A673 (cell line): ENCODE measurements at regions of chr7 and their contacts with region 1.

Region 1: GRCh38 chr7:65216459-65216858 is 157.2 kb upstream of the ZNF92 start:
- DNase-seq: peak; percentile 40
- H3K4me3 ChIP-seq: no peak overlapping the region
- H3K27ac ChIP-seq: no peak overlapping the region
- H3K4me1 ChIP-seq: no peaks in the 10 kb centered on the region
- H3K27me3 ChIP-seq: no peaks in the 10 kb centered on the region
- CTCF ChIP-seq: peak; percentile 75

Region 2: GRCh38 chr7:64313740-64314491 is 902.5 kb before region 1 on chr7 and contains the start of gene ZNF736:
- CTCF ChIA-PET with region 1: no interaction called
- POLR2A ChIA-PET with region 1: no interaction called
- intact Hi-C with region 1: no loop called
- DNase-seq: peak; percentile 39
- H3K4me3 ChIP-seq: peak within 1 kb of the TSS; percentile 36
- H3K27ac ChIP-seq: peak within 1 kb of the TSS; percentile 23
- H3K4me1 ChIP-seq: no peaks in the 10 kb centered on the region
- H3K27me3 ChIP-seq: no peaks in the 10 kb centered on the region
- CTCF ChIP-seq: no peak
- total RNA-seq, gene ZNF736: 1.8 and 3.2 TPM in 2 replicates

Region 3: DNA sequence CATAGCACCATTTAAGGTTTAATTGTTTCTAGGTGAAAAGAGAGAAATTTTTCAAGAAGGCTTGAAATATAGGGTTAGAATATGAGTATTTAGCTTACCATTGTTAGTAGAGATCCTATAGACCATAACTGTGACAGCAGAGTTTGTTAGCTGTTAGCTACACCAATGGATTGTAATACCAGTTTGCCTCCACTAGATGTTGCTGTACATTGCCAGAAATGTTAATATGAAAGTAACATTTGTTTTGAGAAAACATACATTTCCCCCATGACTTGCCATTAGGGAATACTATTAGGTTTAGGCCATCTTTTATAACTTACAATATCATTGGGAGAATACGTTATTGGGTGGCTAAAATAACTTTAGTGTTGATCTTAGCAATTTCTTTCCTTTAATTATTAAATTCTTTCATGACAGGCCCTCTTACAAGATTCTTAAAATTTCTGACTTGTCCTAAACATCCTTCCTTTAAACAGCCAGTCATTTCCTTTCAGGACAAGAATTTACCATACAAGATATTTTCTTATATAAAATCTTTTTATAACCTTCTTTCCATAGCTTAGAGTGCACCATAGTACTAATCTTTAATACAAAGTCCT is 265.1 kb before region 1 on chr7:
- CTCF ChIA-PET with region 1: no interaction called
- POLR2A ChIA-PET with region 1: no interaction called
- intact Hi-C with region 1: loop called (anchors 5 kb)
- DNase-seq: peak; percentile 65
- H3K4me3 ChIP-seq: no peak overlapping the region
- H3K27ac ChIP-seq: no peak overlapping the region
- H3K4me1 ChIP-seq: no peaks in the 10 kb centered on the region
- H3K27me3 ChIP-seq: peaks cover 7% of the 10 kb centered on the region
- CTCF ChIP-seq: peak; percentile 75

Region 4: DNA sequence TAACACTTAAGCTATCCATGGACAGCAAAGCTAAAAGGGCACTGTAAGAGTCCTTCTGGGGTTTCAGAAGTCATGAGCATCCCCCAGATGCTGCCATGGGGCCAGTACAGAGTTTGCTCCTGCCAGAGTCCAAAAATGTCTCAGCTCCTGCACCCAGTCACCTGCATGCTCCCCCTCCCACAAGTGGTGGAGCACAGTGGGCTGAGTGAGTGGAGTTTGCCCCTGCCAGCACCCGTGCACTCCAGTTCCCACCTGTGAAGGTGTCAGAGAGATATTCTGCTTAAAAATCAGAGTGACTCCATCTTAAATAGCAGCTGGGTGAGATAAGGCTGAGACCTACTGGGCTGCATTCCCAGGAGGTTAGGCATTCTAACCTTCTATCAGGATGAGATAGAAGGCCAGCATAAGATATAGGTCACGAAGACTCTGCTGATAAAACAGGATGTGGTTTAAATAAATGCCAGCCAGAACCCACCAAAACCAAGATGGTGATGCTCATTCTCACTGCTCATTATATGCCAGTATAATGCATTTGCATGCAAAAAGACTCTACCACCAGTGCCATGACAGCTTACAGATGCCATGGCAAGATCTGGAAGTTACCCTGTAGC is 17.1 kb after region 1 on chr7:
- CTCF ChIA-PET with region 1: no interaction called
- POLR2A ChIA-PET with region 1: no interaction called
- intact Hi-C with region 1: no loop called
- DNase-seq: no peak
- H3K4me3 ChIP-seq: no peak overlapping the region
- H3K27ac ChIP-seq: no peak overlapping the region
- H3K4me1 ChIP-seq: peaks cover 6% of the 10 kb centered on the region
- H3K27me3 ChIP-seq: no peaks in the 10 kb centered on the region
- CTCF ChIP-seq: no peak

Region 5: DNA sequence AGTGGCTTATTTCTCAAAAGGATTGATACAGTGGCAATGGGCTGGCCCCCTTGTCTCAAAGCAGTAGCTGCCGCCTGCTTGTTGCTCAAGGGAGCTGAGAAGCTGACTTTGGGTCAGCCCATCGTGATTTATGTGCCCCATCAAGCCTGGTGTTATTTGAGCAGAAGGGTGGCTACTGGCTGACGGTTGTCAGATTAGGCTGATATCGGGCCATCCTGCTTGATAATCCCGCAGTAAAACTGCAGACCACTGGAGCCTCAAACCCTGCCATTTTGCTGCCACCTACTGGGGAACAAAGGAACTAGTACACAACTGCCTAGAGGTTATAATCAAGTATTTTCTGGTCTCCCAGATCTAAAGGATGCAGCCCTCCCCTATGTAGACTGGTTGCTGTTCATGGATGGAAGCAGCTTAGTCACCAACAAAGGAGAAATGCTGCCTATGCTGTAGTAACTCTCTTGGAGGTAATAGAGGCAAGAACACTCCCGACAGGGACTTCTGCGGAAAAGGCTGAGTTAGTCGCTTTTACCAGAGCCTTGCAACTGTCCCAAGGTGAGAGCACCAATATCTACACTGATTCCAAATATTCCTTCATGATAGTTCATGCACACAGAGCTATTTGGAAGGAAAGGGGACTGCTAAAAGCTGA is 91.3 kb after region 1 on chr7:
- CTCF ChIA-PET with region 1: interaction called, 4 read pairs
- POLR2A ChIA-PET with region 1: no interaction called
- intact Hi-C with region 1: loop called (anchors 1 kb)
- DNase-seq: peak; percentile 79
- H3K4me3 ChIP-seq: no peak overlapping the region
- H3K27ac ChIP-seq: no peak overlapping the region
- H3K4me1 ChIP-seq: no peaks in the 10 kb centered on the region
- H3K27me3 ChIP-seq: no peaks in the 10 kb centered on the region
- CTCF ChIP-seq: peak; percentile 82

Region 6: GRCh38 chr7:65722345-65722792 is 505.9 kb after region 1 on chr7:
- CTCF ChIA-PET with region 1: interaction called, 13 read pairs
- POLR2A ChIA-PET with region 1: no interaction called
- intact Hi-C with region 1: no loop called
- DNase-seq: peak; percentile 33
- H3K4me3 ChIP-seq: no peak overlapping the region
- H3K27ac ChIP-seq: no peak overlapping the region
- H3K4me1 ChIP-seq: no peaks in the 10 kb centered on the region
- H3K27me3 ChIP-seq: no peaks in the 10 kb centered on the region
- CTCF ChIP-seq: peak; percentile 85